ENCODE measurements at regions of chr14 and their contacts with region 1.

Region 1: GRCh38 chr14:71103662-71104484 is 196.6 kb downstream of the PCNX1 start:
- DNase-seq: no peak
- ATAC-seq: peak; percentile 47
- H3K4me3 Mint-ChIP-seq: no peak overlapping the region
- H3K27ac Mint-ChIP-seq: peak overlapping the region; percentile 2
- H3K4me1 Mint-ChIP-seq: peaks cover 3% of the 10 kb centered on the region
- H3K27me3 Mint-ChIP-seq: no peaks in the 10 kb centered on the region
- CTCF ChIP-seq: peak; percentile 93

Region 2: GRCh38 chr14:71060825-71061455 is 42.9 kb before region 1 on chr14:
- CTCF ChIA-PET with region 1: interaction called, 11 read pairs
- POLR2A ChIA-PET with region 1: no interaction called
- intact Hi-C with region 1: no loop called
- DNase-seq: no peak
- ATAC-seq: no peak
- H3K4me3 Mint-ChIP-seq: no peak overlapping the region
- H3K27ac Mint-ChIP-seq: peak overlapping the region; percentile 7
- H3K4me1 Mint-ChIP-seq: peaks cover 3% of the 10 kb centered on the region
- H3K27me3 Mint-ChIP-seq: no peaks in the 10 kb centered on the region
- CTCF ChIP-seq: no peak

Region 3: GRCh38 chr14:71089971-71090370 is 13.9 kb before region 1 on chr14:
- CTCF ChIA-PET with region 1: interaction called, 11 read pairs
- POLR2A ChIA-PET with region 1: interaction called, 3 read pairs
- intact Hi-C with region 1: no loop called
- DNase-seq: no peak
- ATAC-seq: no peak
- H3K4me3 Mint-ChIP-seq: no peak overlapping the region
- H3K27ac Mint-ChIP-seq: no peak overlapping the region
- H3K4me1 Mint-ChIP-seq: no peaks in the 10 kb centered on the region
- H3K27me3 Mint-ChIP-seq: no peaks in the 10 kb centered on the region
- CTCF ChIP-seq: no peak

Region 4: GRCh38 chr14:71117839-71118743 is 14.2 kb after region 1 on chr14:
- CTCF ChIA-PET with region 1: interaction called, 10 read pairs
- POLR2A ChIA-PET with region 1: no interaction called
- intact Hi-C with region 1: no loop called
- DNase-seq: no peak
- ATAC-seq: peak; percentile 29
- H3K4me3 Mint-ChIP-seq: no peak overlapping the region
- H3K27ac Mint-ChIP-seq: peak overlapping the region; percentile 53
- H3K4me1 Mint-ChIP-seq: peaks cover 17% of the 10 kb centered on the region
- H3K27me3 Mint-ChIP-seq: no peaks in the 10 kb centered on the region
- CTCF ChIP-seq: no peak

Region 5: DNA sequence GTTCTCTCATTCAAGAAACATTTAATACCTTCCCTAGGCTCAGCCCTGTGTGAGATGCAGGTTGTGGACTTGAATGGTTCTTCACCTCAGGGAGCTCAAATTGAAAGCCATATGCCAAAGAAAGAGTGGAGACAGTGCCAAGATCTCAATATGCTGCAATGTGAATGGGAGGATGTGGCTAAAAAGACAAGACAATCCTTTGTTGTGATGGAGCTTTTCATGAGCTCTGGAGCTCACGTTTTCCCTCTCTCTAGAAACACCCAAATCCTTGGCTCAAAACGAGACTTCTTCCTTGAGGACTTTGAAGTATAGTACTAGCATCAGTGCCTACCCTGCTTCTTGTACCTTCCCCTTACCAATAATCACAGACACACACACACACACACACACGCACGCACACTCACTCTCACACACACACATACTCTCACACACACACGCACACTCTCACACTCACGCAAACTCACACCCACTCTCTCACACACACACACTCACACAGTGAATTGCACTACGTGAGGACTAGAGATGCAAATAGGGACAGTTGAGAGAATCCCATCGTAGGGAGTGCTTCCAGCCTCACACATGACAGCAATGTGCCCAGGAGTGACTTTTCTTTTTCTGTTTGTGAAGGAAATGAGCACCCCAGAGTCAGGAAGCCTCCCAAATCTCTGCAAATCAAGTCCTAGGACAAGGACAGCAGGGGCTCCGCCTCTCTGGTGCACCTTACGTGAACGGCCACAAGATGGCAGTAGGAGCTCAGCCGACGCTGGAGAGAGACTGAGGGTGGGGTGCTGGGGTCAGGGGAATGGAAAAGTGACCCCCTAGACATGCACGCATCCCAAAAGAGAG is 34.8 kb after region 1 on chr14:
- CTCF ChIA-PET with region 1: interaction called, 12 read pairs
- POLR2A ChIA-PET with region 1: no interaction called
- intact Hi-C with region 1: no loop called
- DNase-seq: peak; percentile 68
- ATAC-seq: no peak
- H3K4me3 Mint-ChIP-seq: no peak overlapping the region
- H3K27ac Mint-ChIP-seq: no peak overlapping the region
- H3K4me1 Mint-ChIP-seq: peaks cover 23% of the 10 kb centered on the region
- H3K27me3 Mint-ChIP-seq: no peaks in the 10 kb centered on the region
- CTCF ChIP-seq: peak; percentile 97